Adrenal gland (tissue), 19 donors: ENCODE measurements at regions of chr10 and their contacts with region 1.

Region 1: DNA sequence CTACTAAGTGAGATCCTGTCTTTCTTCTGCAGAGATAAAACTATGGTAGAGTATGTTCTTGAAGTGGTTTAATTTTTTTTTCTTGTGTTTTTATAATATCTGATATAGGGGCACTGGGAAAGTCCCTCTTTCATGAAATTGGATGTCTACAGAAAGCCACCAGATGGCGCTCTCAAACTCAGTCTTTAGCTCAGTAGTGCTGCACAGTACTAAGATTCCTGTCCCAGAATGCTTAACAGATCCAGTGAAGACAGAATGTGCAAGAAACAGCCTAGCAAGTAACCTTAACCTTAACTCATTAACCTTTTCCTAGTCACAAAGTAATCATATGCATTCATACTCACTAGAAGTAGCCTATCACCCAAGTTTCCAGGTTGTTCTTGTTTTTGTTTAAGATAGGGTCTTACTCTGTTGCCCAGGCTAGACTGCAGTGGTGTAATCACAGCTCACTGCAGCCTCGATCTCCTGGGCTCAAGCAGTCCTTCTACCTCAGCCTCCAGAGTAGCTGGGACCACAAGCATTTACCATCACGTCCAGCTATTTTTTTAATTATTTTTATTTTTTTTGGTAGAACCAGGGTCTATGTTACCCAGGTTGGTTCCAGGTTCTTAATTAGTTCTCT is 56.7 kb downstream of the IDE start:
- DNase-seq: peak; percentile 58 to 87 (median 67)
- H3K4me3 ChIP-seq: no peak overlapping the region
- H3K27ac ChIP-seq: no peak overlapping the region
- H3K4me1 ChIP-seq: no peaks in the 10 kb centered on the region
- H3K27me3 ChIP-seq: no peaks in the 10 kb centered on the region
- CTCF ChIP-seq: peak; percentile 72 to 86 (median 81)
- POLR2A ChIP-seq: no peak

Region 2: GRCh38 chr10:92573798-92574547 is 56.8 kb after region 1 on chr10 and contains the start of gene IDE:
- intact Hi-C with region 1: loop called (anchors 2 to 5 kb)
- DNase-seq: peak; percentile 88 to 92 (median 89)
- H3K4me3 ChIP-seq: peak within 1 kb of the TSS; percentile 57 to 74 (median 64)
- H3K27ac ChIP-seq: peak within 1 kb of the TSS; percentile 74 to 97 (median 90)
- H3K4me1 ChIP-seq: peaks cover 9 to 27% of the 10 kb centered on the region in 2 donors
- H3K27me3 ChIP-seq: no peaks in the 10 kb centered on the region
- CTCF ChIP-seq: peak; percentile 72 to 85 (median 80)
- POLR2A ChIP-seq: peak; percentile 64 to 79
- total RNA-seq, gene IDE: 24.5 to 62.0 (median 38.2) TPM